ENCODE measurements at regions of chr21 and their contacts with region 1.

Region 1: DNA sequence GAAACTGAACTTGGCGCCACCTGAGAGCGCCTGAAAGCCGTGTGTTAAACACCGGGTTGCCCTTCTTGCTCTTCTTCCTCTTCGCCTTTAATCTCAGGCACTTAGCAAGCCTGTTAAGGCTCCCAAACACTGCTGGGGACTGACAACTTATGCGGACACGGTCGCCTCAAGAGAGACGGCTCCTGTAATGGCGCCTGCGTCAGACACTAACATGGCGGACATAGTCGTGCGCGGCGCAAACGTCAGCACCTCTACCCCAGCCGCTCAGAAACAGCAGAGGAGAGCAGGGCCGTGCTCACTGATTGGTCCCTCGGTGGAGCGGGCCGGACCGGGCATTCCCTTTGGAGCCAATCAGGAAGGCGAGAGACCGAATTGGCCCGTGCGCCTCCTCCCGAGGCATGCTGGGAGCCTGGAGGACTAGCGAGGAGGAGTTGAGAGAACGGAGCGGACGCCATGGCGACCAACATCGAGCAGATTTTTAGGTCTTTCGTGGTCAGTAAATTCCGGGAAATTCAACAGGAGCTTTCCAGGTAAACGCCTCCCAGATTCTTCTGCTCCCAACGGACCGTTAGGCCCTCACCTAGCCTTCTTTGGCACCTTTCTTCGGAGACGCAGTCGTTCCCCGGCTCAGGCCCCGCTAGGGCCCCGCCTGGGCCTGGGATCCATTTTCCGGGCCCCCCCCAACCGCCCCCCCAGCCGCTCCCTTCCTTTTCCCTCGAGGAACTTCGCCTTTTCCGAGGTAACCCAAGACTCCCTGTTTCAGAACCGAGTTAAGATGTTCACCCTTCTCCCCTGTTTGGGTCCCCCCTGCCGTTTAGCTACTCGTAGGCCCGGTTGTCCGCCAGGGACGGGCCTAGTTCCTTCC is at the start of gene SON:
- DNase-seq: peak; percentile 94 to 99 (median 96)
- ATAC-seq: peak; percentile 89
- H3K4me3 ChIP-seq: peak within 1 kb of the TSS; percentile 91
- H3K4me3 Mint-ChIP-seq: peak within 1 kb of the TSS; percentile 95
- H3K27ac ChIP-seq: peak within 1 kb of the TSS; percentile 99 to 100
- H3K27ac Mint-ChIP-seq: peak within 1 kb of the TSS; percentile 98
- H3K4me1 ChIP-seq: peaks cover 15% of the 10 kb centered on the region
- H3K4me1 Mint-ChIP-seq: peaks cover 53% of the 10 kb centered on the region
- H3K27me3 ChIP-seq: no peaks in the 10 kb centered on the region
- H3K27me3 Mint-ChIP-seq: no peaks in the 10 kb centered on the region
- CTCF ChIP-seq: no peak
- total RNA-seq, gene SON: 420 to 438 TPM

Region 2: DNA sequence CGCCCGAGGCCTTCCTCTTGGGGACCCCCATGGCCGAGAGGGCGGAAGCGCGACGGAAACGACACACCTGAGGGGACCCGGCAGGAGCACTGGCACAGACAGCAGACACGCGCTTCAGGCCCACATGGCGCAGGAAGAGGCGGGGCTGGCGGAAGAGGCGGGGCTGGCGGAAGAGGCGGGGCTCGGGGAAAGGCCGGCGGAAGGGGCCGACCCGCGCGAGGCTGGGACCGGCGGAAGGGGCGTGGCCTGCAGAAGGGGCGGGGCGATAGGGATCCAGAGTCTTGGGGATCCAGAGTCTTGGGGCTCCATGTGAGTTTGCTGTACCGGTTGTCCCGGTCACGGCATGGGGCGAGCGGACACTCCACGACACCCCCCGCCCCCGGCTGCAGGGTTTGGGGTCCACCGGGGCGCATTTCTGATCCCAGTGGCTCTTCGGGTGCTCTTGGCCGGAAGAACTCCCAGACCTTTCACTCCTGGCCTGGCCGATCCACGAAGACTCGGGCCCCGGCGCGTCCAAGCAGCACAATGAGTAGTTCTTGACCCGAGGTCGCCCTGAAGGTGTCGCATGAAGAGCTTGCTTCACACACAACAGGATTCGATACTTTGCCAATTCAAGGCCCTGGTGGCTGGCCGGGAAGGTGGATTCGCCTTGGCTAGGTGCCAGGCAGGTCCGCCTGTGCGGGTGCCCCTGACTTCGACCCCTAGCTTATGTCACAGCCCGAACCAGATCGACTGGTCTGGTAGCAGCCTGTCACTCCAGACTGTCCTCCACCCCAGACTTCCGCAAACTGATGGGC is 1149.8 kb before region 1 on chr21 and contains the start of gene URB1:
- CTCF ChIA-PET with region 1: no interaction called
- POLR2A ChIA-PET with region 1: no interaction called
- intact Hi-C with region 1: loop called in 1 of 2 experiments (anchors 5 kb)
- DNase-seq: peak; percentile 90 to 98 (median 95)
- ATAC-seq: peak; percentile 97
- H3K4me3 ChIP-seq: peak within 1 kb of the TSS; percentile 98
- H3K4me3 Mint-ChIP-seq: peak within 1 kb of the TSS; percentile 94
- H3K27ac ChIP-seq: peak within 1 kb of the TSS; percentile 60 to 64
- H3K27ac Mint-ChIP-seq: peak within 1 kb of the TSS; percentile 80
- H3K4me1 ChIP-seq: peaks cover 26% of the 10 kb centered on the region
- H3K4me1 Mint-ChIP-seq: peaks cover 52% of the 10 kb centered on the region
- H3K27me3 ChIP-seq: no peaks in the 10 kb centered on the region
- H3K27me3 Mint-ChIP-seq: peaks cover under 1% of the 10 kb centered on the region
- CTCF ChIP-seq: no peak
- total RNA-seq, gene URB1: 5.4 to 5.7 TPM

Region 3: DNA sequence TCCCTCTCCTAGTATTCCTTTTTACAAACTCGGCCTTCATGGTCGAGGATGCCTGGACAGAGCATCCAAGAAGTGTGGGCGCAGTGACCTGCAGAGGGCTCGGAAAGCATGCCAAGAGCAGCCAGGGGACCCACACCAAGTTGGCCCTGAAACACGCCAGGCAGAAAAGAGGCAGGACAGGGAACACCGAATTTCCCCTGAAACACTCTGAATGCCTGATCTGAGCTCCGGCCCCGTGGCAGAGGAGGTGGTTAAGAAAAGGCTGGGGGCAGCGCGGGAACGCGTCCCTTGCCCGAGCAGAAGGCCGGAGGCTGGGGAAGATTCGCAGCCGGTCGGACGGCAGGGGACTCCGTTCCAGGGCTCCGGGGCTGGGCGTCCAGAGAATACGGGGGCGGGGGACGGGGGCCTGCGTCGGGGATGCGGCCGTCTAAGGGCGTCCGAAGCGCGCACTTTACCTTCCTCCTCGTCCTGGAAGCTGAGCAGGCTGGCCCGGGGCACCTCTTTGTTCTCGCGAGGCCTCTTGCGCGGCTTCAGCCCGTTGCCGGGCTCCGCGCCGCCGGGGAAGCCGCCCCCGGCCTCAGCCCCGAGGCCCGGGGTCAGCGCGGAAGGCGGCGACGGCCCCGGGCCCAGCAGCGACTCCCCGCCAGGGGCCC is 771.9 kb before region 1 on chr21:
- CTCF ChIA-PET with region 1: no interaction called
- POLR2A ChIA-PET with region 1: interaction called, 17 read pairs
- intact Hi-C with region 1: no loop called
- DNase-seq: peak in 9 of 14 experiments; percentile 1 to 56 (median 33)
- ATAC-seq: peak; percentile 15
- H3K4me3 ChIP-seq: peak overlapping the region; percentile 84
- H3K4me3 Mint-ChIP-seq: peak overlapping the region; percentile 97
- H3K27ac ChIP-seq: peak overlapping the region in 1 of 2 donors; percentile 82
- H3K27ac Mint-ChIP-seq: peak overlapping the region; percentile 93
- H3K4me1 ChIP-seq: peaks cover 30% of the 10 kb centered on the region
- H3K4me1 Mint-ChIP-seq: peaks cover 68% of the 10 kb centered on the region
- H3K27me3 ChIP-seq: no peaks in the 10 kb centered on the region
- H3K27me3 Mint-ChIP-seq: peaks cover 8% of the 10 kb centered on the region
- CTCF ChIP-seq: no peak

Region 4: GRCh38 chr21:33196941-33197374 is 345.9 kb before region 1 on chr21:
- CTCF ChIA-PET with region 1: no interaction called
- POLR2A ChIA-PET with region 1: no interaction called
- intact Hi-C with region 1: no loop called
- DNase-seq: peak in 13 of 14 experiments; percentile 26 to 85 (median 54)
- ATAC-seq: peak; percentile 28
- H3K4me3 ChIP-seq: no peak overlapping the region
- H3K4me3 Mint-ChIP-seq: no peak overlapping the region
- H3K27ac ChIP-seq: no peak overlapping the region
- H3K27ac Mint-ChIP-seq: no peak overlapping the region
- H3K4me1 ChIP-seq: peaks cover 16% of the 10 kb centered on the region
- H3K4me1 Mint-ChIP-seq: peaks cover 36% of the 10 kb centered on the region
- H3K27me3 ChIP-seq: no peaks in the 10 kb centered on the region
- H3K27me3 Mint-ChIP-seq: no peaks in the 10 kb centered on the region
- CTCF ChIP-seq: peak; percentile 89

Region 5: GRCh38 chr21:33386222-33386784 is 156.6 kb before region 1 on chr21:
- CTCF ChIA-PET with region 1: no interaction called
- POLR2A ChIA-PET with region 1: interaction called, 10 read pairs
- intact Hi-C with region 1: no loop called
- DNase-seq: no peak
- ATAC-seq: no peak
- H3K4me3 ChIP-seq: no peak overlapping the region
- H3K4me3 Mint-ChIP-seq: no peak overlapping the region
- H3K27ac ChIP-seq: no peak overlapping the region
- H3K27ac Mint-ChIP-seq: no peak overlapping the region
- H3K4me1 ChIP-seq: peaks cover 45% of the 10 kb centered on the region
- H3K4me1 Mint-ChIP-seq: peaks cover 44% of the 10 kb centered on the region
- H3K27me3 ChIP-seq: no peaks in the 10 kb centered on the region
- H3K27me3 Mint-ChIP-seq: no peaks in the 10 kb centered on the region
- CTCF ChIP-seq: no peak

Region 6: GRCh38 chr21:33491373-33492102 is 51.3 kb before region 1 on chr21 and contains the start of gene DNAJC28:
- CTCF ChIA-PET with region 1: no interaction called
- POLR2A ChIA-PET with region 1: interaction called, 27 read pairs
- intact Hi-C with region 1: loop called in 1 of 2 experiments (anchors 1 kb)
- DNase-seq: peak; percentile 89 to 96 (median 92)
- ATAC-seq: peak; percentile 96
- H3K4me3 ChIP-seq: peak within 1 kb of the TSS; percentile 73
- H3K4me3 Mint-ChIP-seq: peak within 1 kb of the TSS; percentile 94
- H3K27ac ChIP-seq: peak within 1 kb of the TSS; percentile 39 to 63
- H3K27ac Mint-ChIP-seq: peak within 1 kb of the TSS; percentile 85
- H3K4me1 ChIP-seq: peaks cover 14% of the 10 kb centered on the region
- H3K4me1 Mint-ChIP-seq: peaks cover 13% of the 10 kb centered on the region
- H3K27me3 ChIP-seq: no peaks in the 10 kb centered on the region
- H3K27me3 Mint-ChIP-seq: no peaks in the 10 kb centered on the region
- CTCF ChIP-seq: no peak
- total RNA-seq, gene DNAJC28: not detected

Region 7: DNA sequence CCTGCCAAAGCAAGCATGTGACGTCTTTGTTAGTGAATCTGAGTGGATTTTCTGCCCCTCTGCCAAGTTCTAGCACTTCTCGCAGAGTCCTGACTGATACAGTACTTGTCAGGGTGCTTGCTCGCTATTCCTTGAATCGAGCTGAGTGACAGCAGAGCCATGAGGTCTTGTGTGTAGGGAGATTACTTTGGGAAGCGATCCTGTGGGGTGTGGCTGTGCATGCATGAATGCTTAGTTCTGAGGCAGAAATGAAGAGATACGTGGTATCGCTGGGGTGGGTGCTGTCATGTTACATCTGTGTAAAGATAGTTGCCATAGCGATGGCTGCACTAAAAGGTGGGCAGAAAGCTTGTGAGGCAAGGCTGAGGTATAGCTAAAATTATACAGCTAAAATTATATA is 32.0 kb before region 1 on chr21:
- CTCF ChIA-PET with region 1: no interaction called
- POLR2A ChIA-PET with region 1: no interaction called
- intact Hi-C with region 1: no loop called
- DNase-seq: no peak
- ATAC-seq: no peak
- H3K4me3 ChIP-seq: no peak overlapping the region
- H3K4me3 Mint-ChIP-seq: no peak overlapping the region
- H3K27ac ChIP-seq: no peak overlapping the region
- H3K27ac Mint-ChIP-seq: no peak overlapping the region
- H3K4me1 ChIP-seq: no peaks in the 10 kb centered on the region
- H3K4me1 Mint-ChIP-seq: no peaks in the 10 kb centered on the region
- H3K27me3 ChIP-seq: no peaks in the 10 kb centered on the region
- H3K27me3 Mint-ChIP-seq: no peaks in the 10 kb centered on the region
- CTCF ChIP-seq: no peak

Region 8: DNA sequence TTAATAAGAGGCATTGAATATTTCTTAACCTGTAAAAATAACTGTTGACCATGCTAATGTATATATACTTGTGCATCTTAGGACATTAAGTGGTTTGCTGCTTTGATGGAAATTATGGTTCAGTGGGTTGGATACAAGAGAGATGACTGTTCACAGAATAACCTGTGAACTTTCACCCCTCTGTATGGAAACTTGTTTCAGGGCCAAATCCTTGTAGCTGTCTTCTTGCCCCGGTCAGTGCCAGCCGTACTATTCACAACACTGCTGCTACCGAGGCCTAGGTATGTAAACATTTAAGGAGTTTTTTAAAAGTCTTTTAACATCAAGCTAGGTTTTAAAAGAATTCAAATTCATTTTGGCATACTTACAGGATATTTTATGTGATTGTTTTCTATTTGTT is 29.5 kb after region 1 on chr21:
- CTCF ChIA-PET with region 1: interaction called, 3 read pairs
- POLR2A ChIA-PET with region 1: interaction called, 25 read pairs
- intact Hi-C with region 1: no loop called
- DNase-seq: no peak
- ATAC-seq: no peak
- H3K4me3 ChIP-seq: no peak overlapping the region
- H3K4me3 Mint-ChIP-seq: no peak overlapping the region
- H3K27ac ChIP-seq: no peak overlapping the region
- H3K27ac Mint-ChIP-seq: peak overlapping the region; percentile 48
- H3K4me1 ChIP-seq: no peaks in the 10 kb centered on the region
- H3K4me1 Mint-ChIP-seq: peaks cover 28% of the 10 kb centered on the region
- H3K27me3 ChIP-seq: no peaks in the 10 kb centered on the region
- H3K27me3 Mint-ChIP-seq: no peaks in the 10 kb centered on the region
- CTCF ChIP-seq: no peak

Region 9: DNA sequence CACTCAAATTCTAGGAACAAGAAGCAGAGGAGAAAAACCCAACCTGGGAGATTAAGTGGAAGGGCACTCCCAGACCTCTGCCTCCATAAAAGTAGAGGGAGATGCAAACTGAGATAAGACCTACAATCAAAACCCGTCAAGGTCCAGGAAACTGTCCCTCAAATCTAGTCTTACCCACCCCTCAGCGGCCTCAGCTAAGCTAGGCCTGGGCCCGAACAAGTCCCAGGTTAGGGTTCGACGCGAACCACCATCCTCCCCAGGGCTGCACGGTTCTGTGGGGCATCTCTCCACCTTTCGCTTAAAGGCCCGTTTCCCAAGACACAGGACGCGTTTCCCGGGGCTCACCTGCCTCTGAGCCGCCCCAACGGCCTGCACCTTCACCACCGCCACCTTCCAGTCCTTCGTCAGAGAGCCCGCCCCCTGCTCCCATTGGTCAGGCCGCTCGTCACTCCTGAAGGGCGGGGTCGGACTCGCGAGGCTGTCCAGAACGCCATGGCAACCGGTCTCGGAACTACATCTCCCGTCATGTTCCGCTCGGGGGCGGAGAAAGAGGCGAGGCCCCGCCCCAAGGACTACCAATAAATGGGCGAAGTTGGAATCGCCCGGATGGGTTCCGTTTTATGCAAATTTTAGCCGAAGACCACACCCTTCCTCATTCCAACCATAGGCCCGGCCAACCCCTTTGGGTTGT is 98.6 kb after region 1 on chr21 and contains the start of gene CRYZL1:
- CTCF ChIA-PET with region 1: no interaction called
- POLR2A ChIA-PET with region 1: no interaction called
- intact Hi-C with region 1: loop called (anchors 1 kb)
- DNase-seq: peak; percentile 99 to 100 (median 100)
- ATAC-seq: peak; percentile 75
- H3K4me3 ChIP-seq: peak within 1 kb of the TSS; percentile 67
- H3K4me3 Mint-ChIP-seq: peak within 1 kb of the TSS; percentile 95
- H3K27ac ChIP-seq: peak within 1 kb of the TSS; percentile 75 to 81
- H3K27ac Mint-ChIP-seq: peak within 1 kb of the TSS; percentile 85
- H3K4me1 ChIP-seq: peaks cover 18% of the 10 kb centered on the region
- H3K4me1 Mint-ChIP-seq: peaks cover 40% of the 10 kb centered on the region
- H3K27me3 ChIP-seq: peaks cover 5 to 17% of the 10 kb centered on the region in 2 experiments
- H3K27me3 Mint-ChIP-seq: peaks cover 13% of the 10 kb centered on the region
- CTCF ChIP-seq: no peak
- total RNA-seq, gene CRYZL1: 28.6 to 30.5 TPM